Thyroid gland (tissue), 4 donors: ENCODE measurements at regions of chr5 and their contacts with region 1.

Region 1: GRCh38 chr5:121968910-121969607 is 7.3 kb downstream of the SRFBP1 start:
- DNase-seq: no peak
- H3K4me3 ChIP-seq: no peak overlapping the region
- H3K27ac ChIP-seq: peak overlapping the region in 1 of 3 donors; percentile 38
- H3K4me1 ChIP-seq: peaks cover 6 to 15% of the 10 kb centered on the region in 2 donors
- H3K27me3 ChIP-seq: no peaks in the 10 kb centered on the region
- CTCF ChIP-seq: no peak
- POLR2A ChIP-seq: no peak

Region 2: GRCh38 chr5:121915765-121916164 is 53.3 kb before region 1 on chr5:
- intact Hi-C with region 1: no loop called
- DNase-seq: no peak
- H3K4me3 ChIP-seq: no peak overlapping the region
- H3K27ac ChIP-seq: no peak overlapping the region
- H3K4me1 ChIP-seq: no peaks in the 10 kb centered on the region
- H3K27me3 ChIP-seq: no peaks in the 10 kb centered on the region
- CTCF ChIP-seq: no peak
- POLR2A ChIP-seq: no peak

Region 3: GRCh38 chr5:122076664-122077365 is 107.8 kb after region 1 on chr5:
- intact Hi-C with region 1: loop called (anchors 10 kb)
- DNase-seq: peak; percentile 84 to 88
- H3K4me3 ChIP-seq: peak overlapping the region; percentile 18 to 54 (median 29)
- H3K27ac ChIP-seq: peak overlapping the region in 2 of 3 donors; percentile 57 to 65
- H3K4me1 ChIP-seq: peaks cover 5 to 10% of the 10 kb centered on the region in 2 donors
- H3K27me3 ChIP-seq: no peaks in the 10 kb centered on the region
- CTCF ChIP-seq: peak; percentile 37 to 75 (median 56)
- POLR2A ChIP-seq: no peak